Thyroid gland (tissue), 4 donors: ENCODE measurements at regions of chr9 and their contacts with region 1.

Region 1: DNA sequence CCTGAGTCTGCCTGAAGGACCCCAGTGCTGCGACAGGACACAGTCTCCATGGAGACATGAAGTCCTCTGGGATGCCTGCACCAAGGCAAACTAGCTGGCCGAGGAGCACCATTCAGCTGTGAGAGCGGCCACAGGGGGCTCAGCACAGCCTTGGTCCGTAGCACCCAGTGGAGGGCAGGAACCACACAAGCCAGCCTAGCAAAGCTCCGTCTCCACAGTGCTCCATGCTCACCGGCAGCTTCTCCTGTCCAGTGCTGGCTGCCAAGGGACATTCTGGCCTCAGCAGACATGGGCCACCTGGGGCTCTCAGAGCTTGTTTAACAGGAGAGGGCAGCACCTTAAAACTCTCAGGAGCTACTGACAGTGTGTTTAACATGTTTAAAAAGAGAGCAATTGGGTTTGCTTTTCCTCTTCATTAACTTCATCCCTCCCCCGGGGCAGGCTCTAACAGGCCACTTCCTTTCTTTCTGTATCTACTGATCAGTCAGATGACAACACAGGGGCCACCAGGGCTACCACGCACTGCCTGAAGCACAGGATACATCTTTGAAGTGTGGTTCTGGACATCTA is 57.0 kb downstream of the SECISBP2 start:
- DNase-seq: peak; percentile 82 to 83
- H3K4me3 ChIP-seq: no peak overlapping the region
- H3K27ac ChIP-seq: peak overlapping the region; percentile 37 to 76 (median 71)
- H3K4me1 ChIP-seq: peaks cover 20 to 35% of the 10 kb centered on the region in 2 donors
- H3K27me3 ChIP-seq: no peaks in the 10 kb centered on the region
- CTCF ChIP-seq: peak in 4 of 6 experiments; percentile 17 to 55 (median 40)
- POLR2A ChIP-seq: peak in 1 of 2 donors; percentile 50

Region 2: DNA sequence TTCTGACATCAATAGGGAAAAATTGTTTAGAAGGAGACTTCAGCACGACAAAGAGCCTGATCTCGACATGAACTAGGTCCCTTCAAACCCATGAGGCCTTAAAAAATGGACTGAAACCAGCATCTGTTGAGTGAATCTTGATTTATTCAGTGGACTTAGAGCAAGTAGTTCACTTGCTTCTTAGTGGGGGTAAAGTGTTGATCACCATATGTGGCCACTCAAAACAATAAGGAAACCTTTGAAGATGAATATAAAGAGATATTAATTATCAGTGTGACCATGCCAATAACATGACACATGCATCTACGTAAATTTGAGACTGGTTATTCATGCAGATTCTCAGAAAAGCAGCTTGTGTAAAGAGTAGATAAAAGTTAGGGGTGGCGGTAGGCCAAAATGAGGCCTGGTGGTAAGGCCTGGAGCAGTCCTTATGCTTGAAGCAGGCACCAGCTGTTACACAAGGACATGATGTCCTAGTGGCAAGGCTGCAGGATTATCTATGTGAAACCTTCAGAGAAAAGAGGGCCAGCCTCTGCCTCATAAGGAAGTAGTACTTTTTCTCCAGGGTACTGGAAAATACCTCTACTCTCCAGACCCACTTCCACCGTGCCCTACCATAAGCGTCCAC is 322.7 kb before region 1 on chr9:
- intact Hi-C with region 1: no loop called
- DNase-seq: no peak
- H3K4me3 ChIP-seq: no peak overlapping the region
- H3K27ac ChIP-seq: no peak overlapping the region
- H3K4me1 ChIP-seq: no peaks in the 10 kb centered on the region
- H3K27me3 ChIP-seq: no peaks in the 10 kb centered on the region
- CTCF ChIP-seq: no peak
- POLR2A ChIP-seq: no peak

Region 3: GRCh38 chr9:89549031-89549644 is 173.9 kb after region 1 on chr9:
- intact Hi-C with region 1: loop called (anchors 10 kb)
- DNase-seq: peak; percentile 75 to 78
- H3K4me3 ChIP-seq: no peak overlapping the region
- H3K27ac ChIP-seq: no peak overlapping the region
- H3K4me1 ChIP-seq: peaks cover 0 to under 1% of the 10 kb centered on the region in 2 donors
- H3K27me3 ChIP-seq: no peaks in the 10 kb centered on the region
- CTCF ChIP-seq: peak; percentile 56 to 95 (median 88)
- POLR2A ChIP-seq: no peak